Activated CD4-positive, alpha-beta T cell treated with anti-CD3 and anti-CD28 coated beads for 36 hours (primary cell): ENCODE measurements at regions of chr5 and their contacts with region 1.

Region 1: DNA sequence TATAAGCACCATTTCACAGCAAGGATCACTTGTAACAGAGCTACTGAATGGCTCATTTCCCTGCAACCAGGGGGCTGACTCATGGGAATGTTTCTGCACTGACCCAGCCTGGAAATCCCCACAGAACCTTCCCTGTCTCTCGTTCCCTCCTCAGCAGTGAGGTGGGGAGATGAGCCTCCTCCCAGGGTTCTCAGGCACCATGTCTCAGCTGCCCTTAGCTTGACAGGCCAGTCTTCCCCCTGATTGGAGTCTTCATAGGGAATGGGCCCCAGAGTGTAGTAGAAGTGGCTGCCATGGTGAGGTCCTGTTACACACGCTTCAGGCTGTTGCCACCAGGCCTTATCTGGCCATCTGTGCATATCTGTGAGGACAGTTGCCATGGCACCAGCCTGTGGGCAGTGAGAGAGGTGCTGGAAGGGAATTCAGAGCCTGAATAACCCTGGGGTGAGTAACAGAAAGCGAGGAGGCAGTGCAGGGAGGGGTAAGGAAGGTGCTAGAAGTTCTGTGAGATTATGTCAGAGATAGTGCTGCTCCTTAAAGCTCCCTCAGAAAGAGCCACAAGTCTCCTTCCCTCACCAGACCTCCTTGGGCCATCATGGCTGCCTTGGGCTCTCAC is 324.4 kb downstream of the ENC1 start:
- DNase-seq: peak; percentile 62
- ATAC-seq: peak; percentile 55
- H3K4me3 Mint-ChIP-seq: no peak overlapping the region
- H3K27ac Mint-ChIP-seq: peak overlapping the region; percentile 39
- H3K4me1 Mint-ChIP-seq: peaks cover 24% of the 10 kb centered on the region
- H3K27me3 Mint-ChIP-seq: peaks cover 20% of the 10 kb centered on the region

Region 2: DNA sequence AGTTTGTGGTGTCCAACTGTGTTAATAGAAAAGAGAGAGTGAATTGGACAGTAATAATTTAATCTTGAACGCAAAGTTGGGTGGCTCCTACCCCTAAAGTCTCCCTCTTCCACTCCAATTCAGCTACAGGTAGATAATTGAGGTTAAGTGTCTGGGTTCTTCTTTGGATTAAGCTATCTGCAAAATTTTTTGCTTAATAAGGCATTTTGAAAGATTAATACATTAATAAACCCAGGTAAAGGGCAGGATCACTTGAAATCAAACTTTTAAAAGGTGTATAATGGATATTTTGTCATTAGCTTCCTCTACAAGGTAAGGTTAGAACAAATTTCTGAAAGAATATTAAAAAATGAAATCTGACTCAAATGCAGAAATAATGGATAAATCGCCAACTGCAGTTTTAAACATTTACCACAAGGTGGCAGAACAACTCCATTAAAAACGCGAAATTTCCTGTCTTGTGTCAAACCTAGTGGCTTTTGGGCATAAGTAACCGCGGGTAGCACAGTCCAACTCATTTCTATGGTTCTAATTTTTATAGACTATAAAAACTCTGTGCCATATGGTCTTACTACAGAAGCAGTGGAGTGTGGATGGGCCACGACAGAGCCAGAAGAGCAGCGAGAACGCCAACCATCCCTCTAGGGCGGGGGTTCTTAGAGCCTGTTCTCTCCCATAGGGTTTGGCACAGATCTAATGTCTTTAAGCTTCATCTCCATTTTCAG is 413.7 kb before region 1 on chr5:
- CTCF ChIA-PET with region 1: no interaction called
- POLR2A ChIA-PET with region 1: no interaction called
- intact Hi-C with region 1: loop called in 1 of 2 experiments (anchors 1 kb)
- DNase-seq: no peak
- ATAC-seq: no peak
- H3K4me3 Mint-ChIP-seq: no peak overlapping the region
- H3K27ac Mint-ChIP-seq: no peak overlapping the region
- H3K4me1 Mint-ChIP-seq: peaks cover 7% of the 10 kb centered on the region
- H3K27me3 Mint-ChIP-seq: peaks cover 18% of the 10 kb centered on the region

Region 3: GRCh38 chr5:74232281-74232680 is 83.9 kb before region 1 on chr5:
- CTCF ChIA-PET with region 1: no interaction called
- POLR2A ChIA-PET with region 1: no interaction called
- intact Hi-C with region 1: loop called in 1 of 2 experiments (anchors 5 kb)
- DNase-seq: peak; percentile 51
- ATAC-seq: peak; percentile 81
- H3K4me3 Mint-ChIP-seq: no peak overlapping the region
- H3K27ac Mint-ChIP-seq: no peak overlapping the region
- H3K4me1 Mint-ChIP-seq: peaks cover 6% of the 10 kb centered on the region
- H3K27me3 Mint-ChIP-seq: peaks cover 18% of the 10 kb centered on the region

Region 4: GRCh38 chr5:74240786-74241750 is 75.1 kb before region 1 on chr5:
- CTCF ChIA-PET with region 1: no interaction called
- POLR2A ChIA-PET with region 1: no interaction called
- intact Hi-C with region 1: loop called in 1 of 2 experiments (anchors 5 kb)
- DNase-seq: peak; percentile 34
- ATAC-seq: peak; percentile 83
- H3K4me3 Mint-ChIP-seq: no peak overlapping the region
- H3K27ac Mint-ChIP-seq: no peak overlapping the region
- H3K4me1 Mint-ChIP-seq: peaks cover 5% of the 10 kb centered on the region
- H3K27me3 Mint-ChIP-seq: peaks cover 16% of the 10 kb centered on the region

Region 5: GRCh38 chr5:74257645-74258313 is 58.4 kb before region 1 on chr5:
- CTCF ChIA-PET with region 1: no interaction called
- POLR2A ChIA-PET with region 1: no interaction called
- intact Hi-C with region 1: no loop called
- DNase-seq: no peak
- ATAC-seq: no peak
- H3K4me3 Mint-ChIP-seq: no peak overlapping the region
- H3K27ac Mint-ChIP-seq: no peak overlapping the region
- H3K4me1 Mint-ChIP-seq: no peaks in the 10 kb centered on the region
- H3K27me3 Mint-ChIP-seq: peaks cover 8% of the 10 kb centered on the region

Region 6: DNA sequence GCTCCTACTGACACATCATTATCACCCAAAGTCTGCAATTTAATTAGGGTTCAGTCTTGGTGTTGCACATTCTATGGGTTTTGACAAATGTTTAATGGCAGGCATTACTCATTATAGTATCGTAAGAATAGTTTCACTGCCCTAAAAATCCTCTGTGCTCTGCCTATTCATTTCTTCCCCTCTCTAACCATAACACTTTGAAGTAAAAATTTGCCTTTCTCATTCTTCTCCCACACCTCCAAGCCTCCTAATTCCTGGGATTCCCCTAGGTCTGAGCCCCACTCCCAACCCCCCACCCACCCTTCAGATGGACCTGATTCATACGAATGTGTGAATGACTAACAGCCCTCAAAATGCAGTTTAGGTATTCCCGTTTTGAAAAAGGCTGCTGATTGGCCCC is 305.9 kb after region 1 on chr5:
- CTCF ChIA-PET with region 1: no interaction called
- POLR2A ChIA-PET with region 1: no interaction called
- intact Hi-C with region 1: loop called in 1 of 2 experiments (anchors 1 kb)
- DNase-seq: peak; percentile 59
- ATAC-seq: peak; percentile 93
- H3K4me3 Mint-ChIP-seq: no peak overlapping the region
- H3K27ac Mint-ChIP-seq: no peak overlapping the region
- H3K4me1 Mint-ChIP-seq: peaks cover 20% of the 10 kb centered on the region
- H3K27me3 Mint-ChIP-seq: peaks cover 39% of the 10 kb centered on the region

Region 7: GRCh38 chr5:74631081-74631953 is 315.1 kb after region 1 on chr5:
- CTCF ChIA-PET with region 1: no interaction called
- POLR2A ChIA-PET with region 1: no interaction called
- intact Hi-C with region 1: loop called (anchors 2 to 5 kb)
- DNase-seq: peak; percentile 57
- ATAC-seq: peak; percentile 80
- H3K4me3 Mint-ChIP-seq: no peak overlapping the region
- H3K27ac Mint-ChIP-seq: peak overlapping the region; percentile 82
- H3K4me1 Mint-ChIP-seq: peaks cover 31% of the 10 kb centered on the region
- H3K27me3 Mint-ChIP-seq: peaks cover 6% of the 10 kb centered on the region